Adrenal gland (tissue), 19 donors: ENCODE measurements at regions of chr3 and their contacts with region 1.

Region 1: GRCh38 chr3:61847784-61848462 is 286.6 kb downstream of the PTPRG start:
- DNase-seq: peak; percentile 46 to 79 (median 70)
- H3K4me3 ChIP-seq: peak overlapping the region in 1 of 4 donors; percentile 7
- H3K27ac ChIP-seq: peak overlapping the region in 4 of 5 donors; percentile 57 to 85 (median 69)
- H3K4me1 ChIP-seq: peaks cover 22 to 23% of the 10 kb centered on the region in 2 donors
- H3K27me3 ChIP-seq: no peaks in the 10 kb centered on the region
- CTCF ChIP-seq: no peak
- POLR2A ChIP-seq: no peak

Region 2: GRCh38 chr3:61637088-61638051 is 210.6 kb before region 1 on chr3:
- intact Hi-C with region 1: loop called in 1 of 2 experiments (anchors 10 kb)
- DNase-seq: peak; percentile 38 to 75 (median 60)
- H3K4me3 ChIP-seq: peak overlapping the region in 2 of 4 donors; percentile 27 to 44
- H3K27ac ChIP-seq: peak overlapping the region; percentile 0 to 86 (median 73)
- H3K4me1 ChIP-seq: peaks cover 16 to 31% of the 10 kb centered on the region in 2 donors
- H3K27me3 ChIP-seq: no peaks in the 10 kb centered on the region
- CTCF ChIP-seq: no peak
- POLR2A ChIP-seq: peak in 1 of 2 donors; percentile 26